ENCODE measurements at regions of chr9 and their contacts with region 1.

Region 1: GRCh38 chr9:133144137-133144903 is 19.4 kb downstream of the GBGT1 start:
- DNase-seq: peak; percentile 74 to 84
- H3K4me3 ChIP-seq: peak overlapping the region; percentile 20; the same call in 1 of the 2 replicates
- H3K4me3 Mint-ChIP-seq: peak overlapping the region; percentile 65
- H3K27ac Mint-ChIP-seq: peak overlapping the region; percentile 74
- H3K4me1 ChIP-seq: peaks cover 20% of the 10 kb centered on the region
- H3K4me1 Mint-ChIP-seq: peaks cover 4% of the 10 kb centered on the region
- H3K27me3 ChIP-seq: no peaks in the 10 kb centered on the region
- H3K27me3 Mint-ChIP-seq: no peaks in the 10 kb centered on the region
- CTCF ChIP-seq: peak; percentile 82 to 95

Region 2: DNA sequence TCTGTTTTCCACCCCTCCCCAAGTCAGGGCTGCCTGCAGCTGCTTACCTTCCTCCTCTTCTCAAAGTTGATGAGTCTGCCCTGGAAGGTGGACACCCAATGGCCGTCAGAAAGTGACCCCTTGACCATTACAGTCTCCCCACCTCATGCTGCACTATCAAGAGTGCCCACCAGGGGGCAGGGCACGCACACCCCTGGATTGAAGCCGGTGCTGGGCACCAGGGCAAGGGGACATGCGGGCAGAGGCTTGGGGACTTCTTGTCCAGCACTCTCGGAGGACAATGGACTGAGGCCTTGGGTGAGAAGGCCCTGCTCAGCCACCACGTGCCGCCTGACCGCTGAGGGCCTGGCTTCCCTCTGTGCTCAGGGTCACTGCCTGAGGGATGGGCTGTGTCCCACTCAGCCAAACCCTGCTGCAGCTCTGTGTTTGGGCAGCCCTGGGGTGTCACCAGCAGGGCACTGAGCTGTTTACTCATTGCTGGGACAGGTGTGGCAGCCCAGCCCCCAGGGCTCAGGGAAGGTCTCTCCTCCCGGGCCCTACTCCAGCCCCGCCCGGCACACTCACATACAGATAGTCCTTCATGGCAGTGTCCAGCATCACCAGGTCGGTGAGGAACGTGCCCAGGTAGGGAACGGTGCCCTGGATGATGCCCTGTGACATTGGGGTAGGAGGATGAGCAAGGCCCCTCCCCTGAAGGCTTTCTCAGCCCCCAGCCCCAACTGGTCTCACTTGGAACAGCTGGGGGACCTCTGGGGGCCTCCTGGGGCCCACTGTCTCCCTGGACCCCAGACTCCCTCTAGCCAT is 40.9 kb before region 1 on chr9:
- CTCF ChIA-PET with region 1: interaction called, 10 read pairs
- POLR2A ChIA-PET with region 1: no interaction called
- intact Hi-C with region 1: loop called (anchors 1 kb)
- DNase-seq: peak in 1 of 2 experiments; percentile 76
- H3K4me3 ChIP-seq: no peak overlapping the region
- H3K4me3 Mint-ChIP-seq: no peak overlapping the region
- H3K27ac Mint-ChIP-seq: peak overlapping the region; percentile 32
- H3K4me1 ChIP-seq: no peaks in the 10 kb centered on the region
- H3K4me1 Mint-ChIP-seq: no peaks in the 10 kb centered on the region
- H3K27me3 ChIP-seq: no peaks in the 10 kb centered on the region
- H3K27me3 Mint-ChIP-seq: no peaks in the 10 kb centered on the region
- CTCF ChIP-seq: peak; percentile 91 to 93

Region 3: GRCh38 chr9:133133681-133134418 is 10.5 kb before region 1 on chr9:
- CTCF ChIA-PET with region 1: interaction called, 14 read pairs
- POLR2A ChIA-PET with region 1: interaction called, 6 read pairs
- intact Hi-C with region 1: no loop called
- DNase-seq: peak; percentile 77 to 81
- H3K4me3 ChIP-seq: no peak overlapping the region
- H3K4me3 Mint-ChIP-seq: no peak overlapping the region
- H3K27ac Mint-ChIP-seq: peak overlapping the region; percentile 92
- H3K4me1 ChIP-seq: peaks cover 12% of the 10 kb centered on the region; the same call in 1 of the 2 replicates
- H3K4me1 Mint-ChIP-seq: peaks cover 7% of the 10 kb centered on the region
- H3K27me3 ChIP-seq: no peaks in the 10 kb centered on the region
- H3K27me3 Mint-ChIP-seq: no peaks in the 10 kb centered on the region
- CTCF ChIP-seq: no peak